Calu3 (cell line): ENCODE measurements at regions of chr1 and their contacts with region 1.

Region 1: GRCh38 chr1:9494929-9495758 is 44.1 kb upstream of the SLC25A33 start:
- DNase-seq: peak; percentile 58
- H3K4me3 Mint-ChIP-seq: peak overlapping the region; percentile 50
- H3K27ac Mint-ChIP-seq: no peak overlapping the region
- H3K4me1 Mint-ChIP-seq: no peaks in the 10 kb centered on the region
- H3K27me3 Mint-ChIP-seq: peaks cover 23% of the 10 kb centered on the region
- CTCF ChIP-seq: peak; percentile 89

Region 2: GRCh38 chr1:9110669-9111356 is 384.3 kb before region 1 on chr1:
- CTCF ChIA-PET with region 1: interaction called, 6 read pairs
- intact Hi-C with region 1: loop called (anchors 10 kb)
- DNase-seq: peak; percentile 94
- H3K4me3 Mint-ChIP-seq: no peak overlapping the region
- H3K27ac Mint-ChIP-seq: no peak overlapping the region
- H3K4me1 Mint-ChIP-seq: no peaks in the 10 kb centered on the region
- H3K27me3 Mint-ChIP-seq: no peaks in the 10 kb centered on the region
- CTCF ChIP-seq: peak; percentile 66

Region 3: DNA sequence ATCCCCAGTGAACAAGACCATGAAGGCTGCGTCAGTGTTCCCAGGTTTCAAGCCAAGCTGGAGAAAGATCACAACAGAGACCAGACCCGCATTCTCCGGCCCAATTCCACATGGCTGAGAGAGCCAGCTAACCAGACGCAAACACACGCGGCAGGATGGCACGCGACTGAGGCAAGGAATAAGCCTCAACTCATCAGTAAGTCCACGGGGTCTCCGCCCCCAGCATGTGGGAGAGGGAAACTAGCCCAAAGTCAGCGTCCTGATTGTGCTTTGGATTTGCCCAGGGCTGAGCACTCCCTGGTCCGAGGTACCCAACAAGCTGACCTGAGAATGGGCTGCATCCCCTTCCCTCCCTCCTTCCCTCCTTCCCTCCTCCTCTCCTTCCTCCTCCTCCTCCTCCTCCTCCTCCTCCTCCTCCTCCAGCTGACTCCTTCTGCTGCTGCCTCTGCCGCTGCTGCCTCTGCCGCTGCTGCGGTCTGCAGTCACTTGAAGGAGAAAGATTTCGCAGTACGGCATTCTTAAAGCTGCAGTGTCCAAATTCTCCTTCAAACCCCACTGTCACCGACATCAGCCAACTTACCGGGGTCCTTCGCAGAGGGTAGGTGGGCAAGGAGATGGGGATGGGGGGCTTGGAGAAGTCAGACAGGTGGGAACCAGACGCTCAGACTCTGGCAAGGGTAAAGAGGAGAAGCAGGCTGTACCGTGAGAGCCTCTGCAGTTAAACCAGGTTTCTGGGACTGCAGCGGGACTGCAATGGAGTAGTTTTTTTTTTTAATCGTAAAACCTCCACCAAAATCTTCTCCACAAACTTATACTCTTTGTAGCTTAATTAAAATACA is 293.5 kb before region 1 on chr1:
- CTCF ChIA-PET with region 1: interaction called, 8 read pairs
- intact Hi-C with region 1: loop called (anchors 10 kb)
- DNase-seq: no peak
- H3K4me3 Mint-ChIP-seq: peak overlapping the region; percentile 41
- H3K27ac Mint-ChIP-seq: no peak overlapping the region
- H3K4me1 Mint-ChIP-seq: peaks cover 18% of the 10 kb centered on the region
- H3K27me3 Mint-ChIP-seq: peaks cover 94% of the 10 kb centered on the region
- CTCF ChIP-seq: no peak

Region 4: GRCh38 chr1:9289090-9289534 is 206.0 kb before region 1 on chr1:
- CTCF ChIA-PET with region 1: interaction called, 4 read pairs
- intact Hi-C with region 1: loop called (anchors 1 kb)
- DNase-seq: peak; percentile 65
- H3K4me3 Mint-ChIP-seq: no peak overlapping the region
- H3K27ac Mint-ChIP-seq: no peak overlapping the region
- H3K4me1 Mint-ChIP-seq: no peaks in the 10 kb centered on the region
- H3K27me3 Mint-ChIP-seq: no peaks in the 10 kb centered on the region
- CTCF ChIP-seq: peak; percentile 79

Region 5: DNA sequence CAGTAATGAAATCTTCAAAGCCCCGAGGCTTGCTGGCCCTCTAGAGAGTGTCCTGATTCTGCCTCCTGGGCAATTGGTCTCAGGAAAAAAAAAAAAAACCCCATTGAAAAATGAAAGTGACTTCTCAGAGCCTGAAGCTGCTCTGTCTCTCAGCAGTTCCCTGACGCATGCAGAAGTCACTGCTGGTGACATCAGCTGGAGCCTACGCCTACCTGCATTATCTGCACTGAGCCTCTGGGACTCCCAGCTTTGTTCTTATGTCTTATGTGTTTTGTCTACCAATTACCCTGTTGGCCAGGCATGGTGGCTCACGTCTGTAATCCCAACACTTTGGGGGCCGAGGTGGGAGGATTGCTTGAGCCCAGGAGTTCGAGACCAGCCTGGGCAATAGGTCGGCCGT is 34.0 kb after region 1 on chr1:
- CTCF ChIA-PET with region 1: no interaction called
- intact Hi-C with region 1: no loop called
- DNase-seq: no peak
- H3K4me3 Mint-ChIP-seq: no peak overlapping the region
- H3K27ac Mint-ChIP-seq: no peak overlapping the region
- H3K4me1 Mint-ChIP-seq: no peaks in the 10 kb centered on the region
- H3K27me3 Mint-ChIP-seq: no peaks in the 10 kb centered on the region
- CTCF ChIP-seq: no peak

Region 6: DNA sequence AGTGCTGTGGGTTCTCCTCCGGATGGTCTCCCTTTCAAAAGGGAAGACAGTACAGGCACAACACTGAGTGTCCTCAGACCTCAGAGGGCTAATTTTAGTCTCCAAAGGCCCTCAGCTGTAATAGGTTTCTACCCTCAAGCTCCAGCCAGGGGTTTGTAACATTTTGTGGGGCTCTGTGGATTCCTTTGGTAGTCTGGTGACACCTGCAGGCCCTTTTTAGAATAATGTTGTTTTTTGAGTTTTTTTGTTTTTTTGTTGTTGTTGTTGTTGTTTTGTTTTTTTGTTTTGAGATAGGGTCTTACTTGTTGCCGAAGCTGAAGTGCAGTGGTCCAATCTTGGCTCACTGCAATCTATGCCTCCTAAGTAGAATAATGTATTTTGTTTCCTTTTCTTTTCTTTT is 78.6 kb after region 1 on chr1:
- CTCF ChIA-PET with region 1: interaction called, 3 read pairs
- intact Hi-C with region 1: loop called (anchors 5 kb)
- DNase-seq: no peak
- H3K4me3 Mint-ChIP-seq: no peak overlapping the region
- H3K27ac Mint-ChIP-seq: no peak overlapping the region
- H3K4me1 Mint-ChIP-seq: no peaks in the 10 kb centered on the region
- H3K27me3 Mint-ChIP-seq: no peaks in the 10 kb centered on the region
- CTCF ChIP-seq: peak; percentile 21